OCI-LY7 (cell line): ENCODE measurements at regions of chr15 and their contacts with region 1.

Region 1: DNA sequence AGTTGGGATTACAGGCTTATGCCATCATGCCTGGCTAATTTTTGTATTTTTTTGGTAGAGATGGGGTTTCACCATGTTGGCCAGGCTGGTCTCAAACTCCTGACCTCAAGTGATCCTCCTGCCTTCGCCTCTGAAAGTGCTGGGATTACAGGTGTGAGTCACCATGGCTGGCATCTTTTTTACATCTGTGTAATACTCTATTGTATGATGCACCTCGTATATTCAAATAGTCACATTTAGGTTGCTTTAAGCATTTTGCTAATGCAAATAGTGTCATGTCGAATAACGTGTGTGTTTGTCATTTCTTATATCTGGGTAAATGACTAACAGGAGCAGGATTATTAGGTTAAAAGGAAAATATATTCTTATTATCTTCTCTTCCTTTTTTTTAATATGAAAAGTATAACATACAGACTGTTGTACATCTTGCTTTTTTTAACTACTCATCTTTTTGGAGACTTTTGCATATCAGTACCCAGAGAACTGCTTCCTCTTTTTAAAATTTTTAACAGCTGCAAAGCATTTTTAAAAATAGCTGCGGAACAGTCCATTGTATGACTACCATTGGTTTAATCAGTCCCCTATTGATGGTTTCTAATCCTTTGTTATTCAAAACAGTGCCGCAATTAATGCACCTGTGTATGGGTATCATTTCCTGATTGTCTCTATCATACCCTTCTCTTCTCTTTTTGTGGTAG is 13.4 kb downstream of the SCAMP5 start:
- DNase-seq: peak; percentile 99
- H3K4me3 ChIP-seq: peak overlapping the region; percentile 67
- H3K27ac ChIP-seq: peak overlapping the region; percentile 98
- H3K4me1 ChIP-seq: peaks cover 77% of the 10 kb centered on the region
- CTCF ChIP-seq: no peak

Region 2: GRCh38 chr15:74787251-74788041 is 221.3 kb before region 1 on chr15:
- CTCF ChIA-PET with region 1: no interaction called
- POLR2A ChIA-PET with region 1: interaction called, 3 read pairs
- intact Hi-C with region 1: loop called (anchors 5 kb)
- DNase-seq: peak; percentile 97
- H3K4me3 ChIP-seq: peak overlapping the region; percentile 97
- H3K27ac ChIP-seq: peak overlapping the region; percentile 99
- H3K4me1 ChIP-seq: peaks cover 86% of the 10 kb centered on the region
- CTCF ChIP-seq: peak; percentile 91

Region 3: GRCh38 chr15:74995241-74995778 is 13.5 kb before region 1 on chr15 and contains the start of gene SCAMP5:
- CTCF ChIA-PET with region 1: interaction called, 4 read pairs
- POLR2A ChIA-PET with region 1: interaction called, 10 read pairs
- intact Hi-C with region 1: no loop called
- DNase-seq: peak; percentile 98
- H3K4me3 ChIP-seq: peak within 1 kb of the TSS; percentile 79
- H3K27ac ChIP-seq: no peak within 1 kb of the TSS
- H3K4me1 ChIP-seq: peaks cover 29% of the 10 kb centered on the region
- CTCF ChIP-seq: no peak
- total RNA-seq, gene SCAMP5: 18.6 and 29.4 TPM in 2 replicates

Region 4: GRCh38 chr15:75023181-75023871 is 14.5 kb after region 1 on chr15 and contains the start of gene PPCDC:
- CTCF ChIA-PET with region 1: interaction called, 4 read pairs
- POLR2A ChIA-PET with region 1: interaction called, 22 read pairs
- intact Hi-C with region 1: loop called (anchors 1 kb)
- DNase-seq: peak; percentile 97
- H3K4me3 ChIP-seq: peak within 1 kb of the TSS; percentile 90
- H3K27ac ChIP-seq: peak within 1 kb of the TSS; percentile 76
- H3K4me1 ChIP-seq: peaks cover 72% of the 10 kb centered on the region
- CTCF ChIP-seq: no peak
- total RNA-seq, gene PPCDC: 32.0 and 44.3 TPM in 2 replicates

Region 5: DNA sequence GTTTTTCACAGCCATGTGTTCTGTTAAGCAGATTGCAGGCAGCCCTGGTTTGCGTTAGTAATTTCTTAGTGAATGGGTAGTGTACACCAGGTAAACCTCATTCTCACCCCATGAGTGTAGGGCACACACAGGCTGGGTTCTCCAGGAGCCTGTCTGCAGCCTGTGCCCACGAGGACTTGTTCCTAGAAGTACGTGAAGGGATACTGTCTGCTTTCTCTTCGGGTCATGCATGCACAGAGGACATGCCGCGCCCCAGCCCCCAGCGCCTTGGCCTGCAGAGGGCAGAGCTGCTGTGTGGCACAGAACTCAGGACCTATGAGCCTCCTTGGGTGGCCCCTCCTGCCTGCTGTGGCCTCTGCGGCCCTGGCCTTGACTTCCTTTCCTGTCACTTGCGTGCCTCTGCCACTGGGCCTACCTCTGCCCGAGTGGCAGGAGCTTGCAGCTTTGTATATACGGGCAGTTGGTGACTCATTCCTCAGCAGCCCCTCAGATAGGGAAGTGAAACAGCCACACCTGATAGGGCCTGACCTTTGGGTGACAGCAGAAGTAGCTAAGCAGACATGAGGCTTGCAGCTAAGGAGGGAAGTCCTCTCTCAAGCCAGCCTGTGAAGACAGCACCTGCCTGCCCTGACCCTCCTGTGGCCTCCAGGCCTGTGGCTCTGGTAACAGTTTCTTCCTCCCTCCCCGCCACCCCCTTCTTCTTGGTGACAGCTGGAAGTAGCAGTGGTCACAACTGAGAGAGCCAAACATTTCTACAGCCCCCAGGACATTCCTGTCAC is 34.1 kb after region 1 on chr15:
- CTCF ChIA-PET with region 1: no interaction called
- POLR2A ChIA-PET with region 1: interaction called, 6 read pairs
- intact Hi-C with region 1: loop called (anchors 1 kb)
- DNase-seq: peak; percentile 98
- H3K4me3 ChIP-seq: peak overlapping the region; percentile 43
- H3K27ac ChIP-seq: peak overlapping the region; percentile 87
- H3K4me1 ChIP-seq: peaks cover 63% of the 10 kb centered on the region
- CTCF ChIP-seq: peak; percentile 73

Region 6: GRCh38 chr15:75069301-75069925 is 60.6 kb after region 1 on chr15:
- CTCF ChIA-PET with region 1: no interaction called
- POLR2A ChIA-PET with region 1: no interaction called
- intact Hi-C with region 1: no loop called
- DNase-seq: peak; percentile 69
- H3K4me3 ChIP-seq: no peak overlapping the region
- H3K27ac ChIP-seq: peak overlapping the region; percentile 49
- H3K4me1 ChIP-seq: peaks cover 28% of the 10 kb centered on the region
- CTCF ChIP-seq: no peak